Left lung (tissue), 14 donors: ENCODE measurements at regions of chr17 and their contacts with region 1.

Region 1: GRCh38 chr17:69335058-69335457 is 8.1 kb upstream of the ABCA5 start:
- DNase-seq: peak in 1 of 4 donors; percentile 18
- ATAC-seq: peak; percentile 72
- H3K4me3 ChIP-seq: no peak overlapping the region
- H3K27ac ChIP-seq: no peak overlapping the region
- H3K4me1 ChIP-seq: no peaks in the 10 kb centered on the region
- H3K27me3 ChIP-seq: no peaks in the 10 kb centered on the region
- CTCF ChIP-seq: peak; percentile 17 to 23

Region 2: DNA sequence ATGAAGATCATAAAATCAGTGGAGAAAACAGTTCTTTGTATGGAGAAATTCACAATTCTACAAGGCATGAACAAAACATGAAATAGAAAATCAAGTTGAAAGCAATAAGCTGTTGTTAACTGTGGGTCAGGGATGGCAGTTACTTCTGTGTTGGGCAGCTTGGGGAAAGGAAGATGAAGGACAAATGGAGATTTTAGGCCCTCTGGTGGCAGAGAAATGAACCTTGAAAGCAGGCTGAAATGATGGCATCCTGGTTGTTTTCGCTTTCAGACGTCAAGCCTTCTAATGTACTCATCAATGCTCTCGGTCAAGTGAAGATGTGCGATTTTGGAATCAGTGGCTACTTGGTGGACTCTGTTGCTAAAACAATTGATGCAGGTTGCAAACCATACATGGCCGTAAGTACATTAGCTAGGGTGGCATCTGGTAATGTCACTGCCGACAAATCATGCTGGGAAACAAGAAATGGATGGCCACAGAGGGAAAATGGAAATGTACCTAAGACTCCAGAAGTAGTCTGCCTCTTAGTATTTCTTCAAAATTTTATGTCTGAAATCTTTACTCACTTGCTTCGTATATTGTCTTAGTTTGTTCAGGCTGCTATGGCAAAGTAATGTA is 188.3 kb after region 1 on chr17:
- intact Hi-C with region 1: loop called in 1 of 2 experiments (anchors 10 kb)
- DNase-seq: peak in 2 of 4 donors; percentile 13 to 50
- ATAC-seq: peak; percentile 64
- H3K4me3 ChIP-seq: no peak overlapping the region
- H3K27ac ChIP-seq: no peak overlapping the region
- H3K4me1 ChIP-seq: no peaks in the 10 kb centered on the region
- H3K27me3 ChIP-seq: no peaks in the 10 kb centered on the region
- CTCF ChIP-seq: peak; percentile 48 to 56